ENCODE measurements at regions of chr19 and their contacts with region 1.

Region 1: DNA sequence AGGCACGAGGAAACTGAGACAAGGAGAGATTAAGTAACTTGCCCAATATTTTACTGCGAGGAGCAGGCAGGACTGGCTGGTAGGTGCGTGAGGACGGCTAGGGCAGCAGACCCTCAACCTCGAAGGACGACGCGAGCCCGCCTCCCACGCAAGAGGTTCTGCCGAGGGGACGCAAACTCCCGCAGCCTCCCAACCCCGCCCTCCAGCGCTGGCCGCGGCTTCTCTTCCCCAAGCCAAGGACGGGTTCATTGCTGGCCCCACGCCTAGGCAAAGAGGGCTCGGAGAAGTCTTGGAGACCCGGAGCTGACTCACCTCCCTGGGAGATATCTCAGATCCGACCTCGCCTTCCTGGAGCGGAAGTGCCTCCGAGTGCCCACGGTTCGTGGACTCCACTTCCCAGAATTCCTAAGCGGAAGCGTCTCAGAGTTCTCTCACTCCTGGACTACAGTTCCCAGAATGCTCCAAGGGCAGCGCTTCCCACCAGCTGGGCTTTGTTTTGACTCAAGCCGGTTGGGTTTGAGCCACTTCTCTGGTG is at the start of gene ZNF235:
- DNase-seq: peak; percentile 99
- H3K4me3 Mint-ChIP-seq: peak within 1 kb of the TSS; percentile 90
- H3K27ac Mint-ChIP-seq: peak within 1 kb of the TSS; percentile 64
- H3K4me1 Mint-ChIP-seq: peaks cover 4% of the 10 kb centered on the region
- H3K27me3 Mint-ChIP-seq: no peaks in the 10 kb centered on the region
- CTCF ChIP-seq: no peak
- total RNA-seq, gene ZNF235: 2.7 and 3.7 TPM in 2 replicates

Region 2: DNA sequence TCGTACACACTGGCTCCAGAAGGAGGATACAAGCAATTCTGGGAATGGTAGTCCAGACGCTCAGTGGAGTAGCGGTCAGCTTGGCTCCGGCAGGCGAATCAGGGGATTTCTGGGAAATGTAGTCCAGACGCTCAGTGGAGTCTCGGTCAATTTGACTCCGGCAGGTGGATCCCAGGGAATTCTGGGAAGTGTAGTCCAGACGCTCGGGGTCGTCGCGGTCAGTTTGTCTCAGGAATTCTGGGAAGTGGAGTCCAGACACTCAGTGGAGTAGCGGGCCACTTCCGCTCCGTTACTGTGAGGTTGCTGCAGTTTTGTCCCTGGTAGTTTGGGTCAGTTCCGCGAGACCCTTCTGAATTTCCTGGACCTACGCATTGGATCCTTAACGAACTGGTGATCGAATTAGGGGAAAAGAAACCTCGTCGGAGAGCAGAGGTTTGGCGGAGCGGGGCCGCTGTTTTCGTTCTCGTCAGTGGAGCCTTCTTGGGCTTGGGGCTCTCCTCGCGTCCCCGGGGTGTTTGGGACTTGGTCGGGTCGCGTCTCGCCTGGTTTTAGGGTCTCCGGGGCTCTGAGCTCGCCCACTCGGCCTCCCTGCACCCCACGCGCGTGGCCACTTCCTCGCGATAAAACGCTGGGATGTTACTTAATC is 191.5 kb before region 1 on chr19 and contains the start of gene ZNF225:
- CTCF ChIA-PET with region 1: no interaction called
- POLR2A ChIA-PET with region 1: interaction called, 4 read pairs
- intact Hi-C with region 1: loop called (anchors 1 kb)
- DNase-seq: peak; percentile 99
- H3K4me3 Mint-ChIP-seq: peak within 1 kb of the TSS; percentile 86
- H3K27ac Mint-ChIP-seq: peak within 1 kb of the TSS; percentile 57
- H3K4me1 Mint-ChIP-seq: peaks cover 6% of the 10 kb centered on the region
- H3K27me3 Mint-ChIP-seq: no peaks in the 10 kb centered on the region
- CTCF ChIP-seq: no peak
- total RNA-seq, gene ZNF225: 3.6 and 5.7 TPM in 2 replicates

Region 3: DNA sequence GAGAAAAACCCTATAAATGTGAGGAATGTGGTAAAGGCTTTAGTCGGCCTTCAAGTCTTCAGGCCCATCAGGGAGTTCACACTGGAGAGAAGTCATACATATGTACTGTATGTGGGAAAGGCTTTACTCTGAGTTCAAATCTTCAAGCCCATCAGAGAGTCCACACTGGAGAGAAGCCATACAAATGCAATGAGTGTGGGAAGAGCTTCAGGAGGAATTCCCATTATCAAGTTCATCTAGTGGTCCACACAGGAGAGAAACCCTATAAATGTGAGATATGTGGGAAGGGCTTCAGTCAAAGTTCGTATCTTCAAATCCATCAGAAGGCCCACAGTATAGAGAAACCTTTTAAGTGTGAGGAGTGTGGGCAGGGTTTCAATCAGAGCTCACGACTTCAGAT is 128.1 kb before region 1 on chr19:
- CTCF ChIA-PET with region 1: no interaction called
- POLR2A ChIA-PET with region 1: no interaction called
- intact Hi-C with region 1: no loop called
- DNase-seq: no peak
- H3K4me3 Mint-ChIP-seq: no peak overlapping the region
- H3K27ac Mint-ChIP-seq: no peak overlapping the region
- H3K4me1 Mint-ChIP-seq: no peaks in the 10 kb centered on the region
- H3K27me3 Mint-ChIP-seq: no peaks in the 10 kb centered on the region
- CTCF ChIP-seq: no peak

Region 4: DNA sequence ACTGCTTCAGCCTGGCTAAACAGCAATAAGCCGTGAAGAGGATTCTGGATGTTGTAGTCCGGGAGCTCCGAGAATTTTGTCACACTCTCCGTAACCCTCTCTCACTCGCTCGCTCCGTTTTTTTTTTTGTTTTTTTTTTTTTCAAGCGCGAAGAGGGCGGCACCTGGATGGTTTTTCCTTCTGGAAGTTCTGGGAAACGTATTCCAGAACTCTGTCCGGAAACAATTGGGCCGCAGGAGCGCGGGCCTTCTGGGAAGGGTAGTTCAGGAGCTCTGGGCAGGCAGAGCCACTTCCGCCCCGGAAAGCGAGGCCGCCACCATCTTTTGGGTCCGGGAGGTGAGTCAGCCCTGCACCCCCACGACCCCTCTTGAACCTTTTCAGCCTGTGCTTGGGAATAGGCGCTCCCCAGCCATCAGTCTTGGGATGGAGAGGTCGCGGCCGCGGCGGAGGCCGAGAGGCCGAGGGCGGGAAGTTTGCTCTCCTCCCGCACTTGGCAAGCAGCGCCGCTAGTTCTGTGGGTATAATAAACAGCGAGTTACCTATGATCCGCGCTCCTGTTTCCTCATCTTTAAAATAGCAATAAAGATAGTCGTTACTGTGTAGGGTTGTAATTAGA is 92.4 kb before region 1 on chr19 and contains the start of gene ZNF227:
- CTCF ChIA-PET with region 1: no interaction called
- POLR2A ChIA-PET with region 1: interaction called, 26 read pairs
- intact Hi-C with region 1: loop called (anchors 2 kb)
- DNase-seq: peak; percentile 96
- H3K4me3 Mint-ChIP-seq: peak within 1 kb of the TSS; percentile 94
- H3K27ac Mint-ChIP-seq: peak within 1 kb of the TSS; percentile 92
- H3K4me1 Mint-ChIP-seq: peaks cover 9% of the 10 kb centered on the region
- H3K27me3 Mint-ChIP-seq: no peaks in the 10 kb centered on the region
- CTCF ChIP-seq: no peak
- total RNA-seq, gene ZNF227: 22.6 and 29.0 TPM in 2 replicates

Region 5: DNA sequence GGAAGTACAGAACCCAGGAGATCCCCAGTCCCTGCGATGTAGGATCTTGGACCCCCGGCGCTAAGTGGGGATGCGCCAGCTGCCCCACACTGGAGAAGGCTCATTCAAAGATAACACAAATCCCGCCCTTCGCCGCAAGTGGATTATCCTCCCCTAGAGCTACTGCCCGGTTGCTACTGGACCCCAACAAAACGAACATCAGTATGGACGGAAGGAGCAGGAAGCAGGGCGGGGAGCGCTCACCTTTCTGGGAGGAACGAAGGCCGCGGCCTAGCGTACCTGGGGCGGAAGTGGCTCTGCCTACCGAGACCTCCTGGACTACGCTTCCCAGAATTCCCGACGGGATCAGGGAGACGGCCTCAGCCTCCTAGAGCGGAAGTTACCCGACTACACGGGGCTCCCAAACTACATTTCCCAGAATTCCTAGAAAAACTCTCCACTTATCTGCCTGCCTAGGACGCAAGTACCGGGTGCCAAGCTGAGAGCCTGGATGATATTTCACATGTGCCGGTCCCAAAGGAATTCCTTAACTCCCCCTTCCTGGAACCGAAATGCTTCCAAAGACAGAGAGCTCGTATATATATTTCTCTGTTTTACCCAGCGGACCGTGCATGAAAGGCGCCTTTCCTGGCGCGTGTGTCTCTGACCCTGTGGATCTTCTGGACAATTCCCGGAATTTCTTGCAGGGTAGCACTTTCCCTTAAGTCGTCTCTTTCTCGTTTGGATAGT is 51.8 kb after region 1 on chr19 and contains the start of gene ZNF112:
- CTCF ChIA-PET with region 1: interaction called, 4 read pairs
- POLR2A ChIA-PET with region 1: interaction called, 13 read pairs
- intact Hi-C with region 1: loop called (anchors 2 kb)
- DNase-seq: peak; percentile 97
- H3K4me3 Mint-ChIP-seq: peak within 1 kb of the TSS; percentile 90
- H3K27ac Mint-ChIP-seq: peak within 1 kb of the TSS; percentile 93
- H3K4me1 Mint-ChIP-seq: no peaks in the 10 kb centered on the region
- H3K27me3 Mint-ChIP-seq: no peaks in the 10 kb centered on the region
- CTCF ChIP-seq: no peak
- total RNA-seq, gene ZNF112: 5.4 and 5.7 TPM in 2 replicates